ENCODE measurements at regions of chrX and their contacts with region 1.

Region 1: GRCh38 chrX:115616943-115617563 is 56.1 kb downstream of the PLS3 start:
- DNase-seq: peak; percentile 95
- ATAC-seq: peak; percentile 82
- H3K4me3 ChIP-seq: peak overlapping the region; percentile 30
- H3K27ac ChIP-seq: peak overlapping the region; percentile 100
- H3K4me1 ChIP-seq: peaks cover 38% of the 10 kb centered on the region
- H3K27me3 ChIP-seq: no peaks in the 10 kb centered on the region
- CTCF ChIP-seq: no peak

Region 2: DNA sequence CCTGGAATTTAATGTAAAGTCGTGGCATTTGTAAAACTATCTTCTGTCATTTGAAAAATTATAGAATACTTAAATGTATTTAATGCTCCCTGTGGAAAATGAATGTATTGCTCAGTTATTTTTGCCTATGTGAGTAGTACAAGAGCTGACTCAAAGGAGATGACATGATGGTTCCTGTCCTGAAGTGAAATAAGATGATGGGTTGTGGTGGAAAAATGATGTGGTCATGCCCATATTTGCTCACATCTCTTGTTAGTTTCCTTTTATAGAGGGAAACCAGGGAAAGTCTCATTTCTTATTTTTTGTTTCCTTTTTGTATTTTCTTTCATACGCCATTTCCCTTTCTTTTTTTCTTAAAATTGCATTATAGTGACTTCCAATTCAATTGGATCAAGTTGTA is 32.4 kb before region 1 on chrX:
- CTCF ChIA-PET with region 1: no interaction called
- POLR2A ChIA-PET with region 1: interaction called, 3 read pairs
- intact Hi-C with region 1: loop called (anchors 5 kb)
- DNase-seq: peak; percentile 51
- ATAC-seq: peak; percentile 36
- H3K4me3 ChIP-seq: no peak overlapping the region
- H3K27ac ChIP-seq: peak overlapping the region; percentile 97
- H3K4me1 ChIP-seq: peaks cover 80% of the 10 kb centered on the region
- H3K27me3 ChIP-seq: no peaks in the 10 kb centered on the region
- CTCF ChIP-seq: no peak

Region 3: GRCh38 chrX:115592997-115593734 is 23.9 kb before region 1 on chrX:
- CTCF ChIA-PET with region 1: interaction called, 13 read pairs
- POLR2A ChIA-PET with region 1: interaction called, 27 read pairs
- intact Hi-C with region 1: loop called (anchors 2 kb)
- DNase-seq: peak; percentile 63
- ATAC-seq: peak; percentile 7; the same call in 1 of the 2 replicates
- H3K4me3 ChIP-seq: peak overlapping the region; percentile 57
- H3K27ac ChIP-seq: peak overlapping the region; percentile 98
- H3K4me1 ChIP-seq: peaks cover 67% of the 10 kb centered on the region
- H3K27me3 ChIP-seq: no peaks in the 10 kb centered on the region
- CTCF ChIP-seq: no peak

Region 4: GRCh38 chrX:115632455-115632854 is 15.4 kb after region 1 on chrX:
- CTCF ChIA-PET with region 1: interaction called, 6 read pairs
- POLR2A ChIA-PET with region 1: interaction called, 6 read pairs
- intact Hi-C with region 1: loop called (anchors 2 kb)
- DNase-seq: peak; percentile 89
- ATAC-seq: peak; percentile 93
- H3K4me3 ChIP-seq: no peak overlapping the region
- H3K27ac ChIP-seq: peak overlapping the region; percentile 98
- H3K4me1 ChIP-seq: peaks cover 33% of the 10 kb centered on the region
- H3K27me3 ChIP-seq: no peaks in the 10 kb centered on the region
- CTCF ChIP-seq: no peak